ENCODE measurements at regions of chr1 and their contacts with region 1.

Region 1: DNA sequence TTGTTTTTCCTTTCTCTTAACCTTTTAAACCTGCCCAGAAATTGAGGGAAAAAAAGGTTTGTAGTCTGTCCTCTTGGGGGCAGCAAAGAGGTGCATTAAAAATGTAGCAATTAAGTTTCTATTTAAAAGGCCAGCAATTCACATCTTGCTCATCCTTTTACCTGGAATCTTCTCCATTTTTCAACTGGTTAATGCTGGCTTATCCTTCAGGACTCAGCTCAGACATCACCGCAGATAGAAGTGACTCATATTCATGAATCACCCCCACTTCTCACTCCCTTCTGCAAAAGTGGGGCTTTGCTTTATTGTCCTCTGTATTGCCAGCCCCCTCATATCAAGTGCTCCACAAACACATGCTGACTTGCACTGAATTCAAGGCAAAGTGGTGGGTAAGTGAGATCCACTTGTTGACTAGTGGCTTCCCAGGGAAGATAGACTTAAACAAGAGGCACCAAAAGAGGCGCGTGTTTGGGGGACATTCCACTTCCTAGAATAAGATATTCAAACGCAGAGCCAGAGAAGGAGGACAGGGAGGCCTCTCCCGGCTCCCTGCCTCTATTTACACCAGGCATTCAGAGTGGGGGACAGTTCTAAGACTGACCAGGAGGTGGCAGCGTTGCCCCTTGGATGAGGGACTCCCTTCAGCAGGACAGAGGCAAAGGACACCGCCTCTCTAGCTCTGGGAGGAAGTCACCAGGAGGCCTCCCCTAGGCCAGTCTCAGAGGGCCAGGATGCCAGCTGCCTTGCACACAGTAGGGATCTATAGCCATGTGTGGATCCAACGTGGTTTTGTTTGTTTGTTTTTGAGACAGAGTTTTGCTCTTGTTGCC is 23.2 kb upstream of the ZNF648 start:
- DNase-seq: peak; percentile 84
- ATAC-seq: peak; percentile 95

Region 2: GRCh38 chr1:181479137-181479745 is 605.5 kb before region 1 on chr1:
- intact Hi-C with region 1: loop called (anchors 5 to 10 kb)
- DNase-seq: peak; percentile 43
- ATAC-seq: peak; percentile 88 to 91

Region 3: DNA sequence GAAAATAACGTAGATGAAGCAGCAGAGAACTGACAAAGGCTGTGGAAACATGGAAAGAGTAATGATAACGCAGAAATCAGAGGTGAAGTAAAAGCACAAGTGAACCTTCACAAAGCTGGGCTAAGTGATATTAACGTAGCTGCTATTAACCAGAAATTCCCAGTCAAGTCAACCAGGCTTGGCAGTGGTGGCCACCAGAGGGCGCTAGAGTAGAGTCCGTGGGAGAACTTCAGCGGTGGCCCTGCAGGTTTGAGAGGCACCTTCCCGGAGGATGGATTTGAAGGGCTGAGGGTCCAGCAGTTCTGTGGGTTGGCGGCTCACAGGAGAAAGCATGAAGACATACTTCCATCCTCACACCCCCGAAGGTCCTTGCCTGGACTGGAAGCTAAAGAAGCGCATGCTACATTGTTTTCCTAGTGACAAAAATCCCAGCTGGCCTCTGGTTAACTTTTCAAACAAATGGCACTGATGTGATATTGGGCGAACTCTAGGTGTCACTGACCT is 58.5 kb after region 1 on chr1:
- intact Hi-C with region 1: loop called in 1 of 2 experiments (anchors 5 kb)
- DNase-seq: peak; percentile 94
- ATAC-seq: peak; percentile 76 to 79

Region 4: DNA sequence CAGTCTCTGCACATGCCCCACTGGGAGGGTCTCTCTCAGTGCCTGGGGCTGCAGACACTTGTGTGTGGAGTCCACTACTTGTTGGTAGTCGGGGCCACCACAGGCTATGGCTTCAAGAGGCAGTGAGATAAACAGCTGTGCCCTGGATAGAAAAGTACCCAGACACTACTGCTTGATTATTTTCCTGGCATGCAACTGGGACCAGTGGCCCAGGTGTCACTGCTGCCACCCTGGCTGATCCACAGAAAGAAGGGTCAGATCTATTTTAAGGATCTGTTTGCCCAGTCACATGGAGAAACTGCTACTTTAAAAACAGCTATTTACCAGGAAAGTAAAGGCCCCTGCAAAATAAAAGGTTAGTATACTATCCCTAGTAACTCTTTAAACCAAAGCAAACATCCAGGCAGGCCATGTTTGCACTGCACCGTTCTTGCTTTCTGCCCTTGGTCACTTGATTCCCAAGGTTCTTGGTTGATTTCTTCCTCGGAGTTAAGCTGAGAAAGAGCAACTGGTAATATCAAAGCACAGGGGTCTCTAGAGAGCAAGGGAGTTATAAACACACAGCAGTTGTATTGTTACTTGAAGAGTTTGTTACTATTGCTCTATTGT is 207.0 kb after region 1 on chr1:
- intact Hi-C with region 1: no loop called
- DNase-seq: no peak
- ATAC-seq: peak; percentile 50 to 55

Region 5: DNA sequence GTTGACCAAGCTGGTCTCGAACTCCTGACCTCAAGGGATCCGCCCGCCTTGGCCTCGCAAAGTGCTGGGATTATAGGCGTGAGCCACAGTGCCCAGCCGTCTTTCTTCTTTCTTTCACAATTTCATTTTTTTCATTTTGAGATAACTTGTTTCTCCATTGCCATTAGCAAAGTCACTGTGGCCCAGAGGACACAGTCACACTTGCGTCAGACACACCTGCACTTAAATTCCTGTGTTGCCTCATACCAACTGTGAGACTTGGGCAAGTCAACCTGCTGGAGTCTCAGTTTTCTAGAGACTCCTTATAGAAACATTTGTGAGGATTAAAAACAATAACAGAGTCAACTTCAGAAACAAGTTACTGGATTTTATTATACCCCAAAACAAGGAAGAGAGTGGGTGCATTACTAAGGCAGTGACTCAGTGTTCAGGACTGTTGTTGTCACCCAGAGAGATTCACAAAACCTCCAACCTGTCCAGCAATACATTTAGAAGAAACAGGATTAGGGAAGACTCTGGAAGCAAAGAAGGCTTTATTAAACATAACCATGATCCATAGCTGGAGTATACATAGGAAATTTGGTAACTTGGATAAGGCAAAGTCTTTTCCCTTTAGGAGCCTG is 313.2 kb after region 1 on chr1:
- intact Hi-C with region 1: loop called (anchors 1 to 5 kb)
- DNase-seq: no peak
- ATAC-seq: no peak

Region 6: GRCh38 chr1:182595641-182596240 is 511.0 kb after region 1 on chr1:
- intact Hi-C with region 1: loop called (anchors 10 kb)
- DNase-seq: peak; percentile 66
- ATAC-seq: peak; percentile 76 to 85

Region 7: DNA sequence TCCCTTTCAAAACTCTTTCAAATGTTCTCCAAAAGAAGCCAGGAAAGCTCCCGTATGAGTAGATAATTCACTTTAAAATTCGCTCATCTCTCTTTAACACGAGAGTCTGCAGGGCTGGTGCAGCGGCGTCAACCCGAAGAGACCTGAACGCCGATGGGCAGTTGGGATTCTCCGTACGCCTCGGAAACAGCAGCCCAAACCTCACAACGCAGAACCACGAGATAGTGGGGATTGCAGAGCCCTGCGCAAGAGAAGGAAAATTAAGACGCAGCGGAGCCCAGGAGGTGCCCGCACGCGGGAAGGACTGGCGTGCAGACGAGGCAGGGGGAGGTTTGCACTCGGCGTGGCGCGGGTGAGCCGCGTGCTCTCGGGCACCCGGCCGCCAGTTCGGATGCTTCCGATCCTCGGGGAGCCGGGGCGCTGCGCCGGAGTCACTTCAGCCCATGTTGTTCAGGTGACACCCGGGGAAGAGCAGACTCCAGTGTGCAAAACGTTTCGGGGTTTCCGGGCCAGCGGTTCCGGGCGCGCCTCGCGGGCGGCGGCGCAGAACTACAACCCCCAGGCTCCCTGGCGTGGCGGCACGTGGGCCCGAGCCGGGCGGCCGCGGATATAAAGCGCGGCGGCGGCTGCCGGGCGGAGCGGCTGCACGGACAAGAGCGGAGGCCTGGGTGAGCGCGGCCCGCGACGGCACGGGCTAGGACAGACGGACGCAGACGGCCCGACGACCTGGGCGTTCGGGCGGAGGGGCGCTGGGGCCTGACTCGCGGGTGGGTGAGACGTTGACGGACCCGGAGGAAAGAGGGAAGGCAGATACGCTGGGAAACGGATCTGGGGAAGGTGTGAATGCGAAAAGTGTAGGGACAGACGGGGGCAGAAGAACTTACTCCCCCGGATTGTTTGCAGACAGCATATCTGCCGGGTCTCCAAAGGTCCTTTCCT is 704.7 kb after region 1 on chr1 and contains the start of gene NPL:
- intact Hi-C with region 1: loop called in 1 of 2 experiments (anchors 5 kb)
- DNase-seq: peak; percentile 88
- ATAC-seq: peak; percentile 98 to 99
- total RNA-seq, gene NPL: 6.7 to 16.7 TPM